Activated CD4-positive, alpha-beta T cell treated with anti-CD3 and anti-CD28 coated beads, Interleukin-2, amount 10 ng/mL, durations not matched to agents 24 days and 14 days (primary cell): ENCODE measurements at regions of chr7 and their contacts with region 1.

Region 1: DNA sequence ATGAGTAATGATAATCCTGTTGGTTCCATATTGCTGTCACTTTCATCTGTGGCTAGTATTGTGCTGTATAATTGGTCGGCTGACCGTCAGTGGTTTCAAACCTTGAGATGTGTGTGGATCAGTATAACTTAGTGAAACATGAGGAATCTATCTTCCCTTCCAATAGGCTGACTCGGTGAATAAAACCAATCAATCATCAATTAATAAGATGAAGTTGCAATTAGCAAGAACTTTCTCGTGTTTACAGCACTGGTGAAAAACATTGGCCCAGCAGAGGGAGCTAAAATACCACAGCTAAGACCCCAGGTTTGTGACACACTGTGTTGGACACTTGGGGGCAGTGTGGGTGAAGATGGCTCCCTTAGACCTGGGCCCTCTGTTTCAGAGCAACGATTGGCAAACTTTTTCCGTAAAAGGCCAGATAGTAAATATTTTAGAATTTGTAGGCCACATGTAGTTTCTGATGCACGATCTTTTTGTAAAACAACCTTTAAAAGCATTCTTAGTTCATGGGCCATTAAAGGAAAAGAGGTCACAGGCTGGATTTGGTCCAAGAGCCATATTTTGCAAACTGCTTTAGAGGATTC is 47.8 kb downstream of the STRA8 start:
- DNase-seq: peak; percentile 93
- H3K4me3 Mint-ChIP-seq: no peak overlapping the region
- H3K27ac Mint-ChIP-seq: no peak overlapping the region
- H3K4me1 Mint-ChIP-seq: peaks cover 13% of the 10 kb centered on the region
- H3K27me3 Mint-ChIP-seq: peaks cover 10% of the 10 kb centered on the region

Region 2: GRCh38 chr7:134458806-134459698 is 822.4 kb before region 1 on chr7 and contains the start of gene AKR1B1:
- intact Hi-C with region 1: no loop called
- DNase-seq: peak; percentile 97
- H3K4me3 Mint-ChIP-seq: peak within 1 kb of the TSS; percentile 90
- H3K27ac Mint-ChIP-seq: peak within 1 kb of the TSS; percentile 83
- H3K4me1 Mint-ChIP-seq: peaks cover 39% of the 10 kb centered on the region
- H3K27me3 Mint-ChIP-seq: no peaks in the 10 kb centered on the region
- total RNA-seq, gene AKR1B1: 107 TPM in 2 replicates

Region 3: DNA sequence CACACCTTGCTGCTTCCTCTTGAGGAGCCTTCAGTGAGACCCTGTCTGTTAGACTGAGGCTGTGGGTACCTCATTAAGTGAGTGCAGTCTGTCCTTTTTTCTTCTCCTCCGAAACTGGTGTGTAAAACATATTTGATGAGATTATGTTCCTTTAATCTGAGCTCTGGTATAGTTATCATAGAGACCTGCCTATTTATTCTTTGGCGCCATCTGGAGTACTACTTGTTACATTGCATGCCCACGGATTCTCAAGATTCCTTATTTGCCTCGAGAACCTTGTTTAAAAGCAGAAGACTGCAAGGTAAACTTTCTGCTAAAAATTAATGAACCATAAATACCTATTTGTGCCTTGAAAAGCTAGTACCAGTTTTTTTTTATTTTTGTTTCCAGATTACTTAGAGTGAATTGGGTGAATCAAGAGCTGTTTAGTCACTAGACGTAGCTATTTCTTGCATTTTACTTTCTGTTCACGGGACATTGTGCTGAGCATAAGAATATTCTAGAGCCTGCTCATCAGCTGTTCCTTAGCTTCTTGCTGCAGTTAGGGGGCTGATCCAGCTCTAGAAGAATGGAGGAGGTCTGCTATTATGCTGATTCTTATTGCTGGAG is 363.9 kb after region 1 on chr7:
- intact Hi-C with region 1: loop called (anchors 1 kb)
- DNase-seq: peak; percentile 76
- H3K4me3 Mint-ChIP-seq: no peak overlapping the region
- H3K27ac Mint-ChIP-seq: no peak overlapping the region
- H3K4me1 Mint-ChIP-seq: no peaks in the 10 kb centered on the region
- H3K27me3 Mint-ChIP-seq: no peaks in the 10 kb centered on the region